ENCODE measurements at regions of chr1 and their contacts with region 1.

Region 1: DNA sequence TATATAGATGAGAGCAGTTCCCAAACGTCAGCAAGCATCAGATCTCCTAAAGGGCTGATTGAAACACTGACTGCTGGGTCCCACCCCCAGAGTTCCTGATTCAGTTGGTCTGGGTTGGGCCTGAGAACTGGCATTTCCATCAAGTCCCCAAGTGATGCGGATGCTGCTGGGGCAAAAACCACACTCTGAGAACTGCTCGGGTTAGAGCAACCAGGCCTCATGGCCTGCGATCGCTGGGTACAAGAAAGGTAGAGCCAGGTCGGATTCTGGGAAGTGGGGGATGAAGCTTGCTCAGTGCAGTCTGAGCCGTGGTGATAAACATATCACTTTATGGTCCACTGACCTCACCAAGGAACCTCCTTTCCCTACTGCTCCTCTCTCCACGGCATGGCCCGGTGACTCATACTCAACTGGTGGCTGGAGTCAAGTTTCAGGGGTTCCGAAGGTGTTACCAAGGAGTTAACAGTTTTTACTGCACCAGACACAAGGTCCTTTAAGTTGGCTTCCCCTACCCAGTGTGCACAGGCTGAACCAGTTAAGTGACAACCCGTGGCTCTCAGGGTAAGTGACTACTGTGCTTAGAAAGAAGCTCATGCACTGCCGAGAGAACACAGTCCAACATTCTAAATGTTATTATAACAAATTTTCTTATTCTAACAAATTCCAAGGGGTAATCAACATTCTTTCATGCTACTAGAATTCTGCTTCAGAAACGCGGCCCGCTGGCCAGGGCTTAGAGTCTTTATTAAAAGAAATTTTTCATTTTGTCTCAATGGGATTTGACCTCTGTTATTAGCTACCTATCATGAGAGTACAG is 153.5 kb downstream of the TGFBR3 start:
- DNase-seq: peak; percentile 87 to 100
- H3K4me3 ChIP-seq: peak overlapping the region; percentile 32; the same call in 1 of the 2 replicates
- H3K27ac ChIP-seq: peak overlapping the region; percentile 79
- H3K4me1 ChIP-seq: peaks cover 76% of the 10 kb centered on the region
- H3K27me3 ChIP-seq: no peaks in the 10 kb centered on the region
- CTCF ChIP-seq: no peak

Region 2: GRCh38 chr1:91529856-91530255 is 202.6 kb before region 1 on chr1:
- CTCF ChIA-PET with region 1: interaction called, 4 read pairs
- POLR2A ChIA-PET with region 1: interaction called, 12 read pairs
- intact Hi-C with region 1: loop called (anchors 2 kb)
- DNase-seq: peak; percentile 22 to 58
- H3K4me3 ChIP-seq: no peak overlapping the region
- H3K27ac ChIP-seq: no peak overlapping the region
- H3K4me1 ChIP-seq: no peaks in the 10 kb centered on the region
- H3K27me3 ChIP-seq: no peaks in the 10 kb centered on the region
- CTCF ChIP-seq: peak; percentile 83

Region 3: DNA sequence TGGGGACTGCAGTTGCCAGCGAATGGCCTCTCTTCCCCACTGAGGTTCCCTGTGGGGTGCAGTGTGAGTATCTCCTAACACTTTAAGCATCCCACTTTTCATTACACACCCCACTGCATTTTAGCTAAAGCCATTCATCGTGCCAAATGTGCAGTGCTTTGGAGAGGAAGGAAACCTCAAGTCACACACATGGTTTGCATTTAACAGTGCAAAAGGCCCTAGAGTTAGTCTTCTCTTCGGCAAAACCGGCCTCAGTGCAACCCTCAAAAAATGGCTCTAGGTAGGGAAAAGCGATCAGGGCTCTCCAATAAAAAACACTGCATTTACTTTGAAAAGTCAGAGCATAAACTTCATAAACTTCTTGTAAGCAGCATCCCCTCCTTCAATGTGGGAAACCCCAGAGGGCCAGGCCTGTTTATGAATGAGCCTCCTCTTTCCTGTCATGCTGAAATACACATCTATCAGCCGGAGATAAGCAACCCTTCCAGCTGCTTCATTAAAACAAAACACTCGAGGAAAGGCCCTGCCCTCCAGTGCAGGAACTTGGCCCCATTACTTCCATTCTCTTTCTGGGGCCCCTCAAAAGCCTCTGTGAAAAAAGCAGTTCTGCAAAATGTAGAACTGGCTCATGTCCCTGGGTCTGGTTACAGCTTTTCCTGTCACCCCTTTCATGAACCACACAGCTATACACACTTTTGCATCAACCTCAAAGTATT is 47.9 kb before region 1 on chr1:
- CTCF ChIA-PET with region 1: interaction called, 3 read pairs
- POLR2A ChIA-PET with region 1: no interaction called
- intact Hi-C with region 1: loop called (anchors 5 kb)
- DNase-seq: no peak
- H3K4me3 ChIP-seq: no peak overlapping the region
- H3K27ac ChIP-seq: no peak overlapping the region
- H3K4me1 ChIP-seq: peaks cover 13% of the 10 kb centered on the region
- H3K27me3 ChIP-seq: no peaks in the 10 kb centered on the region
- CTCF ChIP-seq: no peak

Region 4: GRCh38 chr1:91803847-91804545 is 71.5 kb after region 1 on chr1:
- CTCF ChIA-PET with region 1: no interaction called
- POLR2A ChIA-PET with region 1: no interaction called
- intact Hi-C with region 1: loop called (anchors 2 kb)
- DNase-seq: peak; percentile 10 to 61
- H3K4me3 ChIP-seq: no peak overlapping the region
- H3K27ac ChIP-seq: peak overlapping the region; percentile 90
- H3K4me1 ChIP-seq: peaks cover 34% of the 10 kb centered on the region
- H3K27me3 ChIP-seq: no peaks in the 10 kb centered on the region
- CTCF ChIP-seq: no peak

Region 5: DNA sequence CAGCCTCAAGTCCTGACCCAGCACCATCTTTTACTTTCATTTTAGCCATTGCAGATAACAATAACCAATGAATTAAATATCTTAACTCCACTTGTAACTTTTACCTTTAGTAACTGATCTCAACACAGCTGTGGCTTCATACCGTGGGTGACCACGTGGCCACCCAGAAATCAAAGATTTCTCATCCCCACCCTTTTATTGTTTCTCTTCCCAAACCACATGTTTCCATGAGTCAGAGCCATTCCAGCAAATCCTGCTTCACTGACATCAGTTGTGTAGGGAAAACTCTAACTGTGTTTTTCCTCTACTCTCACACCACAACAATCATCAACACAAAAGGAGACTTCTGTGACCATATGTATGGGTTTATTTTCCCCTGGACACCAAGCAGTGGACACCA is 191.6 kb after region 1 on chr1:
- CTCF ChIA-PET with region 1: no interaction called
- POLR2A ChIA-PET with region 1: no interaction called
- intact Hi-C with region 1: loop called (anchors 10 kb)
- DNase-seq: no peak
- H3K4me3 ChIP-seq: no peak overlapping the region
- H3K27ac ChIP-seq: no peak overlapping the region
- H3K4me1 ChIP-seq: peaks cover 13% of the 10 kb centered on the region
- H3K27me3 ChIP-seq: no peaks in the 10 kb centered on the region
- CTCF ChIP-seq: no peak

Measured in PC-9 (cell line).